ENCODE measurements at regions of chr12 and their contacts with region 1.

Region 1: GRCh38 chr12:6825398-6826124 is 2.6 kb upstream of the P3H3 start:
- DNase-seq: peak; percentile 92
- H3K4me3 ChIP-seq: peak overlapping the region in 1 of 2 experiments; percentile 50; a peak in 2 of 4 replicates
- H3K27ac ChIP-seq: peak overlapping the region in 1 of 2 experiments; percentile 35; a peak in 1 of 4 replicates
- H3K4me1 ChIP-seq: peaks cover 23 to 60% of the 10 kb centered on the region in 2 experiments; a peak in 3 of 4 replicates
- H3K27me3 ChIP-seq: no peaks in the 10 kb centered on the region
- CTCF ChIP-seq: peak; percentile 88
- EP300 ChIP-seq: no peak; a peak in 1 of 4 replicates
- RAD21 ChIP-seq: peak; percentile 94

Region 2: DNA sequence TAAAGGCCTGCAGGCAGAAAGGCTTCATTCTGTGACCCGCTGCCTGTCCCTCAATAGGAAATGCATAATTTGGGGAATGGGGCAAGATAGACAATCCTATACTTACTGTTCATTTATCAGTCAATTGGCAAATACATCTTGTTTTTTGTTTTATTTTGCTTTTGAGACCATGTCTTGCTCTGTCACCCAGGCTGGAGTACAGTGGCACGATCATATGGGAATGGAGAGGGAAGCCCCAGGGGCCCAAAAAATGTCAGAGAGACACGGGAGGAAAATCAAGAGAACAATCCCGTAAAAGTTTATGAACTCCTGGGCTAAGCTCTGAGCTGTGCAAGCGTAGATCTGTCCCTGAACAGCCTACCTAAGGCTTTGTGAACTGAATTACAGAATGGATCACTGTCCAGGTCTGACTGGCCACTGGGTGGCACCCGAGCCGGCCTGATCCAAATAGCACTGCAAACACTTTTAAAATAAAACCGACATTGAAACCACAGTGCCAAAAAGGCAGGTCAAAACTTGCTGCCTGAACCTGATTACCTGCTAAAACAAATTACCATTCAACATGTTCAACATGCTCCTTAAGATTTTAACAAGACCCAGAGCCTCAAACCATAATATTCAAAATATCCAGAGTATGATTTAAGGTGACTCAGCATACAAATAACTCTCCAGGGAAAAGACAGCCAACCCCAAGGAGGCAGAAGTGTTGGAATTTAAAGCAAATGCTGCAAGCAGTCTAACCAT is 89.9 kb before region 1 on chr12:
- CTCF ChIA-PET with region 1: interaction called, 28 read pairs
- POLR2A ChIA-PET with region 1: no interaction called
- DNase-seq: peak; percentile 76
- H3K4me3 ChIP-seq: no peak overlapping the region
- H3K27ac ChIP-seq: peak overlapping the region; percentile 39 to 50; a peak in 3 of 4 replicates
- H3K4me1 ChIP-seq: peaks cover 0 to 6% of the 10 kb centered on the region in 2 experiments; a peak in 1 of 4 replicates
- H3K27me3 ChIP-seq: no peaks in the 10 kb centered on the region
- CTCF ChIP-seq: peak; percentile 81
- EP300 ChIP-seq: no peak
- RAD21 ChIP-seq: peak; percentile 84

Region 3: GRCh38 chr12:6758506-6759095 is 67.0 kb before region 1 on chr12:
- CTCF ChIA-PET with region 1: interaction called, 246 read pairs
- POLR2A ChIA-PET with region 1: interaction called, 46 read pairs
- DNase-seq: no peak
- H3K4me3 ChIP-seq: no peak overlapping the region
- H3K27ac ChIP-seq: no peak overlapping the region
- H3K4me1 ChIP-seq: peaks cover 9 to 11% of the 10 kb centered on the region in 2 experiments
- H3K27me3 ChIP-seq: no peaks in the 10 kb centered on the region
- CTCF ChIP-seq: no peak
- EP300 ChIP-seq: no peak
- RAD21 ChIP-seq: no peak

Region 4: DNA sequence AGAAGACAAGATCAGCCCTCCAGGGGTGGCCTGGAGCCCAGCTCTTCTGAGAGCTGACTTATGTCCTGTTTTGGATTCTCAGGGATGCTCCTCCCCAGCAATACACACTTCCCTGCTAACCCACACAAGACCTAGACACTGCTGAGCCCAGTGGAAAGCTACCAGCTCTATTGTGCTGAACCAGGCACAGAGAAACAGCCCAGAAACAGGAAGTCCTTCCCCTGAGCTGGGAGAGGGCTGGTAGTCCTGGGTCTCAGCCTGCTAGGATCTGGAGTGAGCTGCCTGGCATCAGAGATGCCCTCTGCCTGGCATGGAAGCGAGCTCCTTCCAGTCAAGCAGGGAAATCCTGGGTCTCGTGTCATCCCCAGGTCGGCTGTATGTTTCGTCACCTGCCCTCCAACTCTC is 54.5 kb before region 1 on chr12:
- CTCF ChIA-PET with region 1: interaction called, 74 read pairs
- POLR2A ChIA-PET with region 1: interaction called, 19 read pairs
- DNase-seq: no peak
- H3K4me3 ChIP-seq: no peak overlapping the region
- H3K27ac ChIP-seq: peak overlapping the region; percentile 21 to 56; a peak in 2 of 4 replicates
- H3K4me1 ChIP-seq: peaks cover 9 to 30% of the 10 kb centered on the region in 2 experiments; a peak in 2 of 4 replicates
- H3K27me3 ChIP-seq: no peaks in the 10 kb centered on the region
- CTCF ChIP-seq: no peak
- EP300 ChIP-seq: no peak
- RAD21 ChIP-seq: no peak

Region 5: DNA sequence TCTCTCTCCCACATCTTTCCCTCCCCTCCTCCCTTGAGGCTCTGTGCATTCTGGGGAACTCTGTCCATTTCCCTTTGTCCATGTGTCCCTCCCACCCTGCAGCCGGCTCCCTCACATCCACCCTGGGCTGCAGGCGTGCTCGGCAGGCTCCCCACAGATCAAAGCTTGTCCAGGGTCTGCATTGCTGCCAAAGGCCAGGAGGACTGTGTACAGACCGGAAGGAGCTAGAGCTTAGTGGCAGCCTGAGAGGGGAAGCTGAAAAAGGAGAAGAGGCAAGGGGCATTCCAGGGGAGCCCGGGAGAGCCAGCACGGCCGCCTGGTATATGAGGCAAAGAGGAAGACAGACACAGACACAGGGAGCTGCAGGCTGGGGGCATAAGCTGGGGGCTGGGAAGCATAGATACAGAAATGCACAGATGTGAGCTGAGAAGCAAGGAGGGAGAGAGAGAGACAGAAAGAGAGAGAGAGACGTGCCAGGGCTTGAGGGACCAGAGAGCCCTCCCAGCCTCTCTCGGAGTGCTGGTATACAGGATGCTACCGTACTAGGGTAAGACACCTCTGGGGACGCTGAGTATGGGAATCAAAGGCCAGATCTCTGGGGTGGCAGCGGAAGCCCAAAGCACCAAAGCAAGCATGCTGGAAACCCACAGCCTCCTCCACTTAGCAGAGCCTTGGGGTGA is 32.9 kb before region 1 on chr12:
- CTCF ChIA-PET with region 1: interaction called, 19 read pairs
- POLR2A ChIA-PET with region 1: interaction called, 5 read pairs
- DNase-seq: no peak
- H3K4me3 ChIP-seq: no peak overlapping the region
- H3K27ac ChIP-seq: no peak overlapping the region
- H3K4me1 ChIP-seq: peaks cover 0 to 9% of the 10 kb centered on the region in 2 experiments; a peak in 1 of 4 replicates
- H3K27me3 ChIP-seq: no peaks in the 10 kb centered on the region
- CTCF ChIP-seq: no peak
- EP300 ChIP-seq: no peak
- RAD21 ChIP-seq: no peak

Region 6: GRCh38 chr12:6851921-6852650 is 26.5 kb after region 1 on chr12 and contains the start of gene USP5:
- CTCF ChIA-PET with region 1: interaction called, 225 read pairs
- POLR2A ChIA-PET with region 1: interaction called, 25 read pairs
- DNase-seq: peak; percentile 92
- H3K4me3 ChIP-seq: peak within 1 kb of the TSS; percentile 70 to 76
- H3K27ac ChIP-seq: peak within 1 kb of the TSS; percentile 73 to 97
- H3K4me1 ChIP-seq: peaks cover 7 to 17% of the 10 kb centered on the region in 2 experiments
- H3K27me3 ChIP-seq: no peaks in the 10 kb centered on the region
- CTCF ChIP-seq: 0 out of 2 replicates have a peak, but pooled peaks have one; percentile 7
- EP300 ChIP-seq: no peak
- RAD21 ChIP-seq: no peak
- polyA plus RNA-seq, gene USP5: 97.2 and 100 TPM in 2 replicates

Measured in SK-N-SH (cell line).